Activated CD4-positive, alpha-beta T cell treated with anti-CD3 and anti-CD28 coated beads for 36 hours (primary cell): ENCODE measurements at regions of chr10 and their contacts with region 1.

Region 1: DNA sequence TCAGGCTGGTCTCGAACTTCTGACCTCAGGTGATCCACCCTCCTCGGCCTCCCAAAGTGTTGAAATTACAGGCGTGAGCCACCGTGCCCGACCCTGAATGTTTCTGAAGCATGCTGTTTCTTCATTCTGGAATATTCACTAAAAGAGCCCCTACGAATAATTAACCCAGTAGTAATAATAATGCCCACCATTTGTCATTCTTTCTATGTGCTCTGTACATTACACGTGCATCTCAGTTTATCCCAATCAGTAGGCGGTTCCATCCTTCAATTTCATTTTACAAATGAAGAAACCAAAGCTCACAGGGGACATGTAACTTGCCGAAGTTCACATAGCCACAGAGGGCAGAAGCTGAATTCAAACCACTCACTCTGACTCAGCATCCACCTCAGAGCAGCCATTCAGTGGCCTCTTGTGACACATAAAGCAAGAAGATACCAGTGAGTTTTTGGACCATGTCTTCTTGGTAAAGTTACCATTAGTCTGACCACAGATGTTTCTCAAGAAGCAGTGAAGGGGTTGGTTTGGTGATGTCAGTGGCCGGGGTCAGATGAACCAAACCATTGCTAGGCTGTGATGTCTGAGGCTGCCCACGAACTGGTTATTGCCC is 71.9 kb upstream of the DUSP5 start:
- DNase-seq: peak; percentile 81
- ATAC-seq: peak; percentile 90
- H3K4me3 Mint-ChIP-seq: no peak overlapping the region
- H3K27ac Mint-ChIP-seq: peak overlapping the region; percentile 79
- H3K4me1 Mint-ChIP-seq: peaks cover 40% of the 10 kb centered on the region
- H3K27me3 Mint-ChIP-seq: no peaks in the 10 kb centered on the region

Region 2: GRCh38 chr10:110311357-110311949 is 114.3 kb before region 1 on chr10:
- CTCF ChIA-PET with region 1: interaction called, 3 read pairs
- POLR2A ChIA-PET with region 1: interaction called, 3 read pairs
- intact Hi-C with region 1: loop called (anchors 5 kb)
- DNase-seq: peak; percentile 61
- ATAC-seq: peak; percentile 70
- H3K4me3 Mint-ChIP-seq: no peak overlapping the region
- H3K27ac Mint-ChIP-seq: no peak overlapping the region
- H3K4me1 Mint-ChIP-seq: peaks cover 27% of the 10 kb centered on the region
- H3K27me3 Mint-ChIP-seq: peaks cover 2% of the 10 kb centered on the region

Region 3: DNA sequence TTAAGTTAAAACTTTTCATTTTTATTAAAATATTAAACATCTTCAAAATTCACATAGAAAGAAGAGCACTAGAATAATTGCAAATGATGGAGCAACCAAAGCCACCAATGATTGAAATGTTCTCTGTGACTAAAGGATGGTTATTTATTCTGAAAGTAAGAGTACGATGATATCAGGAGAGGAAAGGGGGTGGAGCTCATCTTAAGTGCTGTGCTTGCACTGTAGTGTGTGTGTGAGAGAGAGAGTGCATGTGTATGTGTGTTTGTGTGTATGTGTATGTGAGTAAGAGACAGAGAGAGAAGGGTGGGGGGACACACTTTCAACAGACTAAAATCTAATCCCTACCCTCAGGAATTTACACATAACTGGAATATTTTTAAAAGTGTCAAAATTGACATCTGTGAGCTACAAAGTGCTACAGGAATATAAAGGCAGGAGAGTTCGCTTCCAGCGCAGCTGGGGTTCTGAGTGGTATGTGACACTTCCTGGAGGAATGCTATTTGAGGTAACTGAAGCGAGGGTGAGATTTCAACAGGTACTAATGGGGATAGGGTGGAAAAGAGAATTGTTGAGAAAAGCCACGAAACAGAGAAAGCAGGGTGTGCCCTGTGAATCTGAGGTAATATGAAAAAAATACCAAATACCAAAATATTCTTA is 63.9 kb before region 1 on chr10:
- CTCF ChIA-PET with region 1: interaction called, 7 read pairs
- POLR2A ChIA-PET with region 1: interaction called, 5 read pairs
- intact Hi-C with region 1: loop called in 1 of 2 experiments (anchors 1 kb)
- DNase-seq: peak; percentile 47
- ATAC-seq: peak; percentile 71
- H3K4me3 Mint-ChIP-seq: peak overlapping the region; percentile 7
- H3K27ac Mint-ChIP-seq: peak overlapping the region; percentile 77
- H3K4me1 Mint-ChIP-seq: peaks cover 84% of the 10 kb centered on the region
- H3K27me3 Mint-ChIP-seq: no peaks in the 10 kb centered on the region

Region 4: DNA sequence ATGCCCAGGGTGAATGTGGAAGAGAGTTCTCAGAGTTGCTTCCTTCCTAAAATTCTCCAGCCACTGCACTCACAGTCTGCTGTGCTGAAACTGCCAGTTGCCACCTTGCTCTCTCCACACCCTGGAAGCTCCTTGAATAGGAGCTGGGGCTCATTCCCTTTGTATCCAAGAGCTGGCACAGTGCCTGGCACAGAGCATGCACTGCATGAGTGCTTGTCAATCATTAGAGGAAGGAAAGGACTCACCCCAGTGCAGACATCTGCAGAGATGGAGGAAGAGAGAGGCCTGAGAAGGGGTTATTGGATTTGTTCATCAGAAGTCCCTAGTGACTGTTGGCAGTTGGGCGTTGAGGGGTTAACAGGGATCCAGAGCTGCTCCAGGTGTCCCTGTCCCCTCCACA is 30.2 kb after region 1 on chr10:
- CTCF ChIA-PET with region 1: no interaction called
- POLR2A ChIA-PET with region 1: no interaction called
- intact Hi-C with region 1: no loop called
- DNase-seq: no peak
- ATAC-seq: no peak
- H3K4me3 Mint-ChIP-seq: no peak overlapping the region
- H3K27ac Mint-ChIP-seq: peak overlapping the region; percentile 8
- H3K4me1 Mint-ChIP-seq: peaks cover 33% of the 10 kb centered on the region
- H3K27me3 Mint-ChIP-seq: no peaks in the 10 kb centered on the region

Region 5: DNA sequence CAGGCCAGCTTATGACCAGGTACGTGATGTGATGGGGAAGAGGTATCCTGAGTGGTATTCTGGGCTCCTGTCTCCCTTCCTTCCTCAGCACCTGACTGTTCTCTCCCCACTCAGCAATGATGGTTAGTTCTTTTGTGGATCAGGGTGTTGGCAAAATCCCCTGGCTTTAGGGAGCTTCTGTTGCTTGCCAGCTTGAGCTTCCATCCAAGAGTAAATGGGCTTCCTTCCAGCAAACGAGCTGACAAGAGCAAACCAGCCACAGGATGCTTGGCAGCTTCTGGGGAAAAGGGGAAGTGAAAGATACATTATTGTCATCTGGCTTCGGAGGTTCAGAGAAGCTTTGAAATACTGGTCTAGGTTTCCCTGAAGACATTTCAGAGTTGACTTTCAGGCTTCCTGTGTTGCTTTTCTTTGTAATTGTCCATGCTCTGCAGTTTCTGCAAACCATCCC is 77.1 kb after region 1 on chr10:
- CTCF ChIA-PET with region 1: interaction called, 4 read pairs
- POLR2A ChIA-PET with region 1: no interaction called
- intact Hi-C with region 1: loop called (anchors 1 to 2 kb)
- DNase-seq: peak; percentile 46
- ATAC-seq: peak; percentile 11
- H3K4me3 Mint-ChIP-seq: peak overlapping the region; percentile 95
- H3K27ac Mint-ChIP-seq: peak overlapping the region; percentile 94
- H3K4me1 Mint-ChIP-seq: peaks cover 79% of the 10 kb centered on the region
- H3K27me3 Mint-ChIP-seq: no peaks in the 10 kb centered on the region

Region 6: GRCh38 chr10:110530131-110530831 is 104.5 kb after region 1 on chr10:
- CTCF ChIA-PET with region 1: no interaction called
- POLR2A ChIA-PET with region 1: interaction called, 3 read pairs
- intact Hi-C with region 1: loop called in 1 of 2 experiments (anchors 1 kb)
- DNase-seq: peak; percentile 38
- ATAC-seq: no peak
- H3K4me3 Mint-ChIP-seq: no peak overlapping the region
- H3K27ac Mint-ChIP-seq: no peak overlapping the region
- H3K4me1 Mint-ChIP-seq: peaks cover 60% of the 10 kb centered on the region
- H3K27me3 Mint-ChIP-seq: peaks cover 3% of the 10 kb centered on the region

Region 7: DNA sequence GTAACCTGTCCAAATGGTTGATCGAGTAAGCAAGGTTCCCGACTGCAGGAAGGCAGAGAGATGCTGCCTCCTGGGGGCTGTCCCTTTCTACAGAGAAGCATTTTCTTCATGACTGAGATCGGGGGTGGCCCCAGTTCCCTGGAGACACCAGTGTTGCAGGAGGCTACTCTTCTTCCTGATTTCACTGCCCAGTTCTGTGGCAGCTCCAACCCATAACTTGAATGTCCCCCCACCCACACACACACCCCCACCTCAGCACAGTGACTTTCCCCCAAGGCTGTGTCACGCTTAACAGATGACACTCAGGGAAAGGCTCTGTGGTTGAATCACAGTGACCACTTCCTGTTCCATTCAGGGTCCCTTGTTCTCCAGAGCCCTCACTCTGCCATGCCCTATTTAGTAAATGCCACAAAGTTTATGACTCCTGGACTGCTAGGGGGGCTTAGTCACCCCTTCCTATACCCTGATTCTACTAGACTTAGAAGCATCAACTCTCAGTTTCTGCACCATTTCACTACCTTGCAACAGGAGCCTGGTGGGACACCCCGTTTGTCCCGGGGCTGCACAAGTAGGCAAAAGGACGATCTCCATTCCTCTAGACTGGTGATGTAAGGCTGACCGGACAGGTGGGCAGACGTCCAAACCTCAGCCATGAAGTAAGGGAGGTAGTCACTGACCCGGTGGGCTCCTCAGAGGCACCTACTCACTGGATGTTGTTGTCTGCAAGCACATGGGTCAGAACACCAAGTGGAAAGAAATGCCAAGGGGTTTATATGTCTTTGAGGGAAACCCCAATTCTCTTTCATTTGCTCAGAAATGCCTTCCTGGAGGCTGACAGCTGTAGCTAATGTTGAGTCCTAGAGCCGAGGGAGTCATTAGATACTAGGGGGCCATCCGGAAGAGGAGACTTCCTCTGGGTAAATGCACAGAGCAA is 110.4 kb after region 1 on chr10:
- CTCF ChIA-PET with region 1: no interaction called
- POLR2A ChIA-PET with region 1: interaction called, 3 read pairs
- intact Hi-C with region 1: loop called in 1 of 2 experiments (anchors 1 kb)
- DNase-seq: peak; percentile 87
- ATAC-seq: peak; percentile 93
- H3K4me3 Mint-ChIP-seq: peak overlapping the region; percentile 15
- H3K27ac Mint-ChIP-seq: peak overlapping the region; percentile 79
- H3K4me1 Mint-ChIP-seq: peaks cover 37% of the 10 kb centered on the region
- H3K27me3 Mint-ChIP-seq: peaks cover 3% of the 10 kb centered on the region